ENCODE measurements at regions of chr20 and their contacts with region 1.

Region 1: DNA sequence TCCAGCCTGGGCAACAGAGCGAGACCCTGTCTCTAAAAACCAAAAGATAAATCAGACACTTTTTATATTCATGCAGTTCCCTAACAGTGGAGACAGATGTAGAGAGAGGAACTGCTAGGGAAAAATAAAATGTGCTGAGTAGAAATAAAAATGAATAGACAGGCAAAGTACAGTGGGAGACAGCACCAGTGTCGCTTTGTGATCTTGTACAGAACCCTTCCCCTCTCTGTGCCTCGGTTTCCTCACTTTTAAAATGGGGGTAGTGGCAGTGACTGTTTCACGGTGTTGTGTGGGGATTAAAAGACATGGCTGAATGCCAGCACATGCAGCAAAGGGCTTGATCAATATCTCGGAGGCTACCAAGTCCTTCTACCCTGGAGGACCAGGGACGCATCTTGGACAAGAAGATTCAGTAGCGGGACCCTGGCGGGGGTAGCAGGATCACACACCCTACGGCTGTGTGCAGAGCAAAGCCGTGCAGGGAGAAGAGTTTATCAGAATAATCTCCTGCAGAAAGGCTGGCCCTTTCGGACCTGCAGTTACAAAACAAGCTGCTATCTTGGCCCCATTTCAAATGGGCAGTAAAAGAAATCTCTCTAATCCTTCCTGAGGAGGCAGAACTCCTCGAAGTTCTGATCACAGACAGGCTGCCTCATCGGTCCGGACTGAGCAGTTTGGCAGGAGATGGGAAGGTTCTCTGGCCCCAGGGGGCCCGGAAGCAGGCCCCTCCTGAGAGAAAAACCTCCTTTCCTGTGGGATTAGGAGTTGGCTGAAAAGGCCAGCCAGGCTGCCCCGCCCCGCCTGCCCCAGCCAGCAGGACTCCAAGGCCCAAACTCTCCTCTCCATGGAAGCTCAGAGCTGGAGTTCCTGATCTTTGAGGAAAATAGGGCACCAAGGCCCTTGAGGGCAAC is 141.7 kb downstream of the PREX1 start:
- DNase-seq: peak; percentile 61
- H3K4me3 ChIP-seq: no peak overlapping the region
- H3K27ac ChIP-seq: peak overlapping the region; percentile 65
- H3K4me1 ChIP-seq: peaks cover 66% of the 10 kb centered on the region
- H3K27me3 ChIP-seq: no peaks in the 10 kb centered on the region
- CTCF ChIP-seq: no peak

Region 2: GRCh38 chr20:48738399-48739304 is 52.5 kb after region 1 on chr20:
- intact Hi-C with region 1: loop called (anchors 5 kb)
- DNase-seq: no peak
- H3K4me3 ChIP-seq: no peak overlapping the region
- H3K27ac ChIP-seq: peak overlapping the region; percentile 12
- H3K4me1 ChIP-seq: peaks cover 39% of the 10 kb centered on the region
- H3K27me3 ChIP-seq: no peaks in the 10 kb centered on the region
- CTCF ChIP-seq: no peak

Region 3: DNA sequence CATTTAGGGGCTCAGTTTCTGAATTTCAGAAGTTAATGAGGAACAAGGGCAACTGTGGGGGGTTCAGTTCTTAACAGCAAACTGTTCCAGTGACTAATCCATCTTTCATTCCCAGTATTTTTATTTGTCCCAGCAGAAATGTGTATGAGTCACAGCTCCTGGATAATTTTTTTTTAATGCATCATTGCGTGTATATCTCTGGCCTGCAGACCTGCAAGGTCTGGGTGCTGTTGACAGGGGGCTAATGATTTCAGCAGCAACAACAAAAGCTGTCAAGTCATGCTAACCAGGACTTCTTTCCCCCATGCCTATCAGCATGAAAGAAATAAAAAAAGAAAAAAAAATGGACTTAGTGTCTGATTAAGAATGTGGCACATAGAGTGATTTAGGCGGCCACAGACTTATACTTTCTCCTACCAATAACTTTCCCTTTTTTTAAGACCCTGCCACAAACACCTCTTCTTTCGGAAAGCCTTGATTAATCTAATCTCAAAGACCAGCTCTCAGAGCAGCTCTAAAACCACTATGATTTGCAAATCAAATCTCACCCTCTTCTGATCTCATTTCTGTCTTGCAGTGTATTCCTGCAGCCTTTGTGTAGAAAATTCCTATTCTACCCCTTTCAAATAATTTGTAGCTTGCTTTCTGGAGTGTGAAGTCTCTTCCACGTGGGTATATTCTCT is 155.9 kb after region 1 on chr20:
- intact Hi-C with region 1: no loop called
- DNase-seq: no peak
- H3K4me3 ChIP-seq: no peak overlapping the region
- H3K27ac ChIP-seq: no peak overlapping the region
- H3K4me1 ChIP-seq: peaks cover 9% of the 10 kb centered on the region
- H3K27me3 ChIP-seq: no peaks in the 10 kb centered on the region
- CTCF ChIP-seq: no peak

Region 4: DNA sequence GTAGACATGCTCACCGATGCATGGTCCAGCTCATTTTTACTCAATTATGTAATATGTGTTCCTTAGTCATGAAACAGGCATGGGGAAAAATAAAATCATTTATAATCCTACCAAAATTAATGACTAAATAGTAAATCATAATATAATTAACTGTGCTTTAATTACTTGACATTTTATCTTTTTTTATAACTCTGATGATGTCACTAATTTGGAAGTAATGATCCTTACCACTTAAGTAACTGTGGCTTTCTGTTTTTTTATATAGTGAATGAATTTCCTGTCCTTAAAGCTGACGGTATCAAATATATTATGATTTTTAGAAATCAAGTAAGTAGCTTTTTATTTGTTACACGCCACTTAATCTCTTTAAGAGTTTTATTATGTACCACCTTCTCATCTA is 392.2 kb after region 1 on chr20:
- intact Hi-C with region 1: no loop called
- DNase-seq: no peak
- H3K4me3 ChIP-seq: no peak overlapping the region
- H3K27ac ChIP-seq: no peak overlapping the region
- H3K4me1 ChIP-seq: no peaks in the 10 kb centered on the region
- H3K27me3 ChIP-seq: no peaks in the 10 kb centered on the region
- CTCF ChIP-seq: no peak

Measured in left ventricle myocardium inferior (tissue), 1 donor.